ENCODE measurements at regions of chr11 and their contacts with region 1.

Region 1: GRCh38 chr11:4072668-4073285 is 21.8 kb upstream of the RRM1 start:
- DNase-seq: peak; percentile 21 to 70 (median 68)
- H3K4me3 ChIP-seq: no peak overlapping the region
- H3K4me3 Mint-ChIP-seq: no peak overlapping the region
- H3K27ac ChIP-seq: no peak overlapping the region
- H3K27ac Mint-ChIP-seq: peak overlapping the region; percentile 51 to 92 (median 83)
- H3K4me1 ChIP-seq: peaks cover 44% of the 10 kb centered on the region
- H3K4me1 Mint-ChIP-seq: peaks cover 42 to 63% (median 57%) of the 10 kb centered on the region in 3 donors
- H3K27me3 ChIP-seq: no peaks in the 10 kb centered on the region
- H3K27me3 Mint-ChIP-seq: no peaks in the 10 kb centered on the region

Region 2: DNA sequence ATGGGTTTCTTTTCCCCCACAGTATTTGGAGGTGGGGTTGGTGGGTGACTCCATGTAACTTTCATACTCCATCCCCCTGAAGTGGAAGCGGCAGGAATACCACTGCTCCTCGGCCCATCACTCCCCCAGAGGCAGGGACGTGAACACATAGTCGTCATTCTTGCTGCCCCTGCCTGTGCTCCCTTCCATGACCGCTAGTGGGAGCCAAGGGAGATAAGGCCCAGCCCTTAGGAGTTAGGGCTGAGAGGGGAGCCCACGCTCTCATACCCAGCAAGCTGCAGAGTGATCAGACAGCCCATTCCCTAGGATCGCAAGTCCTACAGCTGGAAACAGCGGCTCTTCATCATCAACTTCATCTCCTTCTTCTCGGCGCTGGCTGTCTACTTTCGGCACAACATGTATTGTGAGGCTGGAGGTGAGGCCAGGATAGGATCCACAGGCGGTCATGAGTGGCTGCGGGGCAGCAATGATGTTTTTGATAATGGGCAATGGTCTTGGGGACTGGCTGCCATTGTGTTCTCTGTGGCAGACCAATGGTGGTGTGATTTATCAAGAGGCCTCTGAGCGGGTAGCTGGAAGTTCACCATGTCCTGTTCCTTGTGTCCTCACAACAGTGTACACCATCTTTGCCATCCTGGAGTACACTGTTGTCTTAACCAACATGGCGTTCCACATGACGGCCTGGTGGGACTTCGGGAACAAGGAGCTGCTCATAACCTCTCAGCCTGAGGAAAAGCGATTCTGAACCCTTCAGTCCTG is 247.9 kb before region 1 on chr11:
- CTCF ChIA-PET with region 1: interaction called, 10 read pairs
- POLR2A ChIA-PET with region 1: no interaction called
- DNase-seq: peak; percentile 70 to 87 (median 74)
- H3K4me3 ChIP-seq: no peak overlapping the region
- H3K4me3 Mint-ChIP-seq: peak overlapping the region in 2 of 7 donors; percentile 35 to 54
- H3K27ac ChIP-seq: no peak overlapping the region
- H3K27ac Mint-ChIP-seq: peak overlapping the region; percentile 63 to 95 (median 90)
- H3K4me1 ChIP-seq: peaks cover 22% of the 10 kb centered on the region
- H3K4me1 Mint-ChIP-seq: peaks cover 25 to 51% (median 37%) of the 10 kb centered on the region in 3 donors
- H3K27me3 ChIP-seq: no peaks in the 10 kb centered on the region
- H3K27me3 Mint-ChIP-seq: no peaks in the 10 kb centered on the region

Region 3: DNA sequence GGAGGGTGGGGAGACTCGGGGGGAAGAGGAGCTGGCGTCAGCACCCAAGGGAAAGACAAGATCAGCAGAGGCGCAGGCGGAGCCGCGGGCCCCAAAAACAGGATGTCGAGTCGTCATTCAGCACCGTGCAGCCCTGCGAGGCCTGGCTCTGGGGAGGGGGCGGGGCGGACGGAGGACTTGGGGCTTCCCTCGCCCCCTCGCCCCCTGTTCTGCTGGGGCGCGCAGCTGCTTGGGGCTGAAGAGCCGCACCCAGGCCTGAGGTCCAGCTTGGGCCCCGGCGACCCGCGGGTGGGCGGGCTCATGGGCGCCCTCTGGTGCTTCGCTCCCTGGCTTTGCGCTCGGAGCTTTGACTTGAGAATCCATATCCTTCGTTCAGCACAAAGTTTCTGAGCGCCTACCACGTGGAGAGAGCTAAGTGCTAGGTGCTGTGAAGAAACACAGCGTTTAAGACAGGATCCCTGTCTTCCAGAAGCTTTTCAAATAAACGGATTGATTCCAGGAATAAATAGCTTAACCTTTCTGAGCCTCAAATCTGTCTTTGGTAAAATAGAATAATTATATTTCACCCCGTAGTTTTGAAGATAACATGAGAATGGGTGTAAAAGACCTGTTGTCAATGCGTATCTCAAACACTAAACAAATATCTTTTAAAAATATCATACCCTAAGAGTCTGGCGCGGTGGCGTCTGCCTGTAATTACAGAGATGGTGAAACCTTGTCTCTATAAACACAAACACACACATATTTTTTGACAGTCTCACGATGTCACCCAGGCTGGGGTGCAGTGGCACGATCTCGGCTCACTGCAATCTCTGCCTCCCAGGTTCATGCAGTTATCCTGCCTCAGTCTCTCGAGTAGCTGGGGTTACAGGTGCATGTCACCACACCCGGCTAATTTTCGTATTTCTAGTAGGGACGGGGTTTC is 231.1 kb before region 1 on chr11:
- CTCF ChIA-PET with region 1: interaction called, 407 read pairs
- POLR2A ChIA-PET with region 1: interaction called, 11 read pairs
- DNase-seq: peak; percentile 89 to 97 (median 96)
- H3K4me3 ChIP-seq: peak overlapping the region; percentile 60
- H3K4me3 Mint-ChIP-seq: peak overlapping the region; percentile 85 to 96 (median 91)
- H3K27ac ChIP-seq: peak overlapping the region; percentile 86
- H3K27ac Mint-ChIP-seq: peak overlapping the region; percentile 94 to 99 (median 96)
- H3K4me1 ChIP-seq: peaks cover 32% of the 10 kb centered on the region
- H3K4me1 Mint-ChIP-seq: peaks cover 37 to 48% (median 43%) of the 10 kb centered on the region in 3 donors
- H3K27me3 ChIP-seq: no peaks in the 10 kb centered on the region
- H3K27me3 Mint-ChIP-seq: peaks cover 0 to 4% of the 10 kb centered on the region in 2 donors

Region 4: GRCh38 chr11:3867209-3868091 is 205.3 kb before region 1 on chr11:
- CTCF ChIA-PET with region 1: interaction called, 11 read pairs
- POLR2A ChIA-PET with region 1: no interaction called
- DNase-seq: no peak
- H3K4me3 ChIP-seq: peak overlapping the region; percentile 3
- H3K4me3 Mint-ChIP-seq: peak overlapping the region in 6 of 7 donors; percentile 13 to 55 (median 34)
- H3K27ac ChIP-seq: peak overlapping the region; percentile 63
- H3K27ac Mint-ChIP-seq: peak overlapping the region; percentile 26 to 91 (median 84)
- H3K4me1 ChIP-seq: peaks cover 87% of the 10 kb centered on the region
- H3K4me1 Mint-ChIP-seq: peaks cover 83 to 90% (median 89%) of the 10 kb centered on the region in 3 donors
- H3K27me3 ChIP-seq: no peaks in the 10 kb centered on the region
- H3K27me3 Mint-ChIP-seq: no peaks in the 10 kb centered on the region

Region 5: DNA sequence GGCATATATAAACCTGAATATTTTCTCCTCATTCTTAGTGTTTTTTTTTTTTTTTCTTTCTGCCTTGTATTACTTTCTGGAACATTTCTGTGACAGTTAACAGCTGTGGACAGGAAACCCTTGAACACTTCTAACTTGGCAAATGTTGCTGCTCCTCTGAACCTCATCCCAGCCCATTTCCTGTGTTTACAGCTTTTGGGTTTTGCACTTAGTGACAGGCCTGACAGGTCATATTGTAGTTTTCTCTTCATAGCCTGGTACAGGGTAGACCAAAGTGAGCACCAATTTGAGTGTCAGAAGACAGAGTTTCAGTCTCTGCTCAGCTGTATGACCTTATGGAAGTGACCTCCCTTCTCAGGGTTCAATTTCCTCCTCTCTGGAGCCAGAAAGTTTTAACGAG is 125.7 kb before region 1 on chr11:
- CTCF ChIA-PET with region 1: interaction called, 15 read pairs
- POLR2A ChIA-PET with region 1: no interaction called
- DNase-seq: peak; percentile 16 to 81 (median 70)
- H3K4me3 ChIP-seq: peak overlapping the region; percentile 54
- H3K4me3 Mint-ChIP-seq: peak overlapping the region; percentile 22 to 81 (median 77)
- H3K27ac ChIP-seq: peak overlapping the region; percentile 53
- H3K27ac Mint-ChIP-seq: peak overlapping the region; percentile 79 to 99 (median 92)
- H3K4me1 ChIP-seq: peaks cover 98% of the 10 kb centered on the region
- H3K4me1 Mint-ChIP-seq: peaks cover 94 to 97% (median 97%) of the 10 kb centered on the region in 3 donors
- H3K27me3 ChIP-seq: no peaks in the 10 kb centered on the region
- H3K27me3 Mint-ChIP-seq: no peaks in the 10 kb centered on the region

Region 6: GRCh38 chr11:4187055-4187988 is 114.5 kb after region 1 on chr11:
- CTCF ChIA-PET with region 1: no interaction called
- POLR2A ChIA-PET with region 1: no interaction called
- DNase-seq: peak; percentile 71 to 81 (median 72)
- H3K4me3 ChIP-seq: peak overlapping the region; percentile 29
- H3K4me3 Mint-ChIP-seq: peak overlapping the region; percentile 34 to 91 (median 77)
- H3K27ac ChIP-seq: no peak overlapping the region
- H3K27ac Mint-ChIP-seq: peak overlapping the region in 2 of 8 donors; percentile 27 to 57
- H3K4me1 ChIP-seq: no peaks in the 10 kb centered on the region
- H3K4me1 Mint-ChIP-seq: peaks cover 0 to 4% (median 2%) of the 10 kb centered on the region in 3 donors
- H3K27me3 ChIP-seq: no peaks in the 10 kb centered on the region
- H3K27me3 Mint-ChIP-seq: peaks cover 6 to 10% of the 10 kb centered on the region in 2 donors

Measured in CD8-positive, alpha-beta memory T cell (primary cell).